ENCODE measurements at regions of chrX and their contacts with region 1.

Region 1: DNA sequence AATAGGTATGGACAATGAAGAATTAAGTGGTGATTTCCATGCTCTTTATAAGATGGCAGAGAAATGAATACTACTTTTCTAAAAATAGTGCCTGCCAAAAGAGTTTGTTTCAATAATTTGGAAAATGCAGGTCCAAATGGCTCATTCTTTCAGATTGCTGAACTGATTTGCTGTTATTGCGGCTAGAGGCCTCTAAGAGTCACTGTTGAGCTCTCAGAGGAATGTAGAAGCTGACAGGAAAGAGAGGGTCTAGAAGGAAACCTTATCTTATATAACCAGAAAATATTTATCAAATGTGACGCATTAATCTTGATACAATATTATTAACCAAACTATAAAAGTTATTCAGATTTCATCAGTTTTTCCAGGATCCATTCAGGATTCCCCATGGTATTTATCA is 65.7 kb upstream of the PAGE1 start:
- DNase-seq: no peak
- H3K4me3 ChIP-seq: no peak overlapping the region
- H3K27ac ChIP-seq: no peak overlapping the region
- H3K4me1 ChIP-seq: no peaks in the 10 kb centered on the region
- H3K27me3 ChIP-seq: peaks cover 2% of the 10 kb centered on the region
- CTCF ChIP-seq: peak; percentile 55 to 65

Region 2: GRCh38 chrX:49844611-49845010 is 83.1 kb after region 1 on chrX:
- CTCF ChIA-PET with region 1: no interaction called
- dilution Hi-C with region 1: no loop called
- in situ Hi-C with region 1: no loop called
- intact Hi-C with region 1: no loop called
- DNase-seq: no peak
- H3K4me3 ChIP-seq: no peak overlapping the region
- H3K27ac ChIP-seq: no peak overlapping the region
- H3K4me1 ChIP-seq: no peaks in the 10 kb centered on the region
- H3K27me3 ChIP-seq: no peaks in the 10 kb centered on the region
- CTCF ChIP-seq: no peak

Region 3: GRCh38 chrX:49878834-49879659 is 117.6 kb after region 1 on chrX and contains the start of gene USP27X:
- CTCF ChIA-PET with region 1: no interaction called
- dilution Hi-C with region 1: no loop called
- in situ Hi-C with region 1: no loop called
- intact Hi-C with region 1: loop called (anchors 2 kb)
- DNase-seq: peak; percentile 75
- H3K4me3 ChIP-seq: peak within 1 kb of the TSS; percentile 37 to 64 (median 51)
- H3K27ac ChIP-seq: peak within 1 kb of the TSS; percentile 25
- H3K4me1 ChIP-seq: peaks cover 10% of the 10 kb centered on the region
- H3K27me3 ChIP-seq: no peaks in the 10 kb centered on the region
- CTCF ChIP-seq: peak; percentile 40 to 49
- total RNA-seq, gene USP27X: 2.4 to 2.5 TPM